ENCODE measurements at regions of chr3 and their contacts with region 1.

Region 1: GRCh38 chr3:150286390-150287147 is 121.5 kb upstream of the TSC22D2 start:
- DNase-seq: peak in 3 of 5 donors; percentile 35 to 47 (median 45)
- H3K4me3 ChIP-seq: no peak overlapping the region
- H3K4me3 Mint-ChIP-seq: no peak overlapping the region
- H3K27ac ChIP-seq: no peak overlapping the region
- H3K27ac Mint-ChIP-seq: no peak overlapping the region
- H3K4me1 ChIP-seq: no peaks in the 10 kb centered on the region
- H3K4me1 Mint-ChIP-seq: no peaks in the 10 kb centered on the region
- H3K27me3 ChIP-seq: no peaks in the 10 kb centered on the region
- H3K27me3 Mint-ChIP-seq: peaks cover 7 to 38% of the 10 kb centered on the region in 2 donors

Region 2: GRCh38 chr3:150130404-150131100 is 156.0 kb before region 1 on chr3:
- CTCF ChIA-PET with region 1: no interaction called
- POLR2A ChIA-PET with region 1: no interaction called
- DNase-seq: no peak
- H3K4me3 ChIP-seq: no peak overlapping the region
- H3K4me3 Mint-ChIP-seq: no peak overlapping the region
- H3K27ac ChIP-seq: no peak overlapping the region
- H3K27ac Mint-ChIP-seq: no peak overlapping the region
- H3K4me1 ChIP-seq: no peaks in the 10 kb centered on the region
- H3K4me1 Mint-ChIP-seq: no peaks in the 10 kb centered on the region
- H3K27me3 ChIP-seq: peaks cover 6% of the 10 kb centered on the region
- H3K27me3 Mint-ChIP-seq: peaks cover under 1 to 32% of the 10 kb centered on the region in 2 donors

Region 3: GRCh38 chr3:150268426-150269391 is 17.9 kb before region 1 on chr3:
- CTCF ChIA-PET with region 1: no interaction called
- POLR2A ChIA-PET with region 1: no interaction called
- DNase-seq: no peak
- H3K4me3 ChIP-seq: no peak overlapping the region
- H3K4me3 Mint-ChIP-seq: no peak overlapping the region
- H3K27ac ChIP-seq: no peak overlapping the region
- H3K27ac Mint-ChIP-seq: no peak overlapping the region
- H3K4me1 ChIP-seq: no peaks in the 10 kb centered on the region
- H3K4me1 Mint-ChIP-seq: no peaks in the 10 kb centered on the region
- H3K27me3 ChIP-seq: no peaks in the 10 kb centered on the region
- H3K27me3 Mint-ChIP-seq: peaks cover 11 to 27% of the 10 kb centered on the region in 2 donors

Region 4: GRCh38 chr3:150495563-150496168 is 209.1 kb after region 1 on chr3:
- CTCF ChIA-PET with region 1: interaction called, 22 read pairs
- POLR2A ChIA-PET with region 1: no interaction called
- DNase-seq: peak in 2 of 5 donors; percentile 23 to 40
- H3K4me3 ChIP-seq: no peak overlapping the region
- H3K4me3 Mint-ChIP-seq: no peak overlapping the region
- H3K27ac ChIP-seq: no peak overlapping the region
- H3K27ac Mint-ChIP-seq: no peak overlapping the region
- H3K4me1 ChIP-seq: no peaks in the 10 kb centered on the region
- H3K4me1 Mint-ChIP-seq: no peaks in the 10 kb centered on the region
- H3K27me3 ChIP-seq: no peaks in the 10 kb centered on the region
- H3K27me3 Mint-ChIP-seq: peaks cover 2 to 3% of the 10 kb centered on the region in 2 donors

Measured in CD8-positive, alpha-beta memory T cell (primary cell).